GM12878 (cell line): ENCODE measurements at regions of chr7 and their contacts with region 1.

Region 1: GRCh38 chr7:106461993-106462859 is 177.4 kb upstream of the NAMPT start:
- DNase-seq: peak; percentile 39
- ATAC-seq: peak; percentile 83
- H3K4me3 ChIP-seq: no peak overlapping the region
- H3K27ac ChIP-seq: no peak overlapping the region
- H3K4me1 ChIP-seq: peaks cover 12% of the 10 kb centered on the region
- H3K27me3 ChIP-seq: no peaks in the 10 kb centered on the region
- CTCF ChIP-seq: peak; percentile 40 to 56 (median 47); a peak in 5 of 6 replicates
- EP300 ChIP-seq: no peak
- POLR2A ChIP-seq: no peak
- RAD21 ChIP-seq: peak; percentile 79

Region 2: GRCh38 chr7:106056513-106057203 is 405.6 kb before region 1 on chr7:
- CTCF ChIA-PET with region 1: interaction called, 4 read pairs
- POLR2A ChIA-PET with region 1: no interaction called
- RAD21 ChIA-PET with region 1: interaction called, 7 read pairs
- SMC1A ChIA-PET with region 1: interaction called, 4 read pairs
- in situ Hi-C with region 1: no loop called
- intact Hi-C with region 1: loop called (anchors 10 kb)
- DNase-seq: no peak
- ATAC-seq: peak; percentile 75
- H3K4me3 ChIP-seq: no peak overlapping the region
- H3K27ac ChIP-seq: peak overlapping the region; percentile 97
- H3K4me1 ChIP-seq: peaks cover 52% of the 10 kb centered on the region
- H3K27me3 ChIP-seq: no peaks in the 10 kb centered on the region
- CTCF ChIP-seq: peak; percentile 90 to 93 (median 92)
- EP300 ChIP-seq: no peak
- POLR2A ChIP-seq: no peak
- RAD21 ChIP-seq: peak; percentile 95

Region 3: DNA sequence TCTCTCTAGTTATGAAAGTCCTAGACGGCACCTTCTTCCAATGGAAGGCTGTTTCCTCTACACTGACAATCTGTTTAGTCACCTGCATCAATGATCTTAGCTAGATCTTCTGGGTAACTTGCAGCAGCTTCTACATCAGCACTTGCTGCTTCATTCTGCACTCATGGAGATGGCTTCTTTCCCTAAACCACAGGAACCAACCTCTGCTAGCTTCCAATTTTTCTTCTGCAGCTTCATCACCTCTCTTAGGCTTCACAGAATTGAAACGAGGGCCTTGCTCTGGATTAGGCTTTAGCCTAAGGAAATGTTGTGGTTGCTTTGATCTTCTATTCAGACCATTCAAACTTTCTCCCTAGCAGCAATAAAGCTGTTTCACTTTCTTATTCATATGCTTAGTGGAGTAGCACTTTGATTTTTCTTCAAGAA is 202.1 kb before region 1 on chr7:
- CTCF ChIA-PET with region 1: interaction called, 16 read pairs
- POLR2A ChIA-PET with region 1: no interaction called
- RAD21 ChIA-PET with region 1: interaction called, 5 read pairs
- SMC1A ChIA-PET with region 1: interaction called, 32 read pairs
- in situ Hi-C with region 1: no loop called
- intact Hi-C with region 1: no loop called
- DNase-seq: no peak
- ATAC-seq: peak; percentile 28
- H3K4me3 ChIP-seq: no peak overlapping the region
- H3K27ac ChIP-seq: no peak overlapping the region
- H3K4me1 ChIP-seq: peaks cover 18% of the 10 kb centered on the region
- H3K27me3 ChIP-seq: no peaks in the 10 kb centered on the region
- CTCF ChIP-seq: no peak
- EP300 ChIP-seq: no peak
- POLR2A ChIP-seq: no peak
- RAD21 ChIP-seq: no peak

Region 4: GRCh38 chr7:106285051-106285854 is 177.0 kb before region 1 on chr7:
- CTCF ChIA-PET with region 1: interaction called, 21 read pairs
- POLR2A ChIA-PET with region 1: interaction called, 3 read pairs
- RAD21 ChIA-PET with region 1: interaction called, 20 read pairs
- SMC1A ChIA-PET with region 1: interaction called, 8 read pairs
- in situ Hi-C with region 1: no loop called
- intact Hi-C with region 1: loop called (anchors 5 kb)
- DNase-seq: peak; percentile 97
- ATAC-seq: peak; percentile 77
- H3K4me3 ChIP-seq: peak overlapping the region; percentile 99
- H3K27ac ChIP-seq: peak overlapping the region; percentile 100
- H3K4me1 ChIP-seq: peaks cover 3% of the 10 kb centered on the region
- H3K27me3 ChIP-seq: no peaks in the 10 kb centered on the region
- CTCF ChIP-seq: no peak
- EP300 ChIP-seq: peak; percentile 42 to 52; a peak in 2 of 4 replicates
- POLR2A ChIP-seq: peak; percentile 78
- RAD21 ChIP-seq: no peak

Region 5: DNA sequence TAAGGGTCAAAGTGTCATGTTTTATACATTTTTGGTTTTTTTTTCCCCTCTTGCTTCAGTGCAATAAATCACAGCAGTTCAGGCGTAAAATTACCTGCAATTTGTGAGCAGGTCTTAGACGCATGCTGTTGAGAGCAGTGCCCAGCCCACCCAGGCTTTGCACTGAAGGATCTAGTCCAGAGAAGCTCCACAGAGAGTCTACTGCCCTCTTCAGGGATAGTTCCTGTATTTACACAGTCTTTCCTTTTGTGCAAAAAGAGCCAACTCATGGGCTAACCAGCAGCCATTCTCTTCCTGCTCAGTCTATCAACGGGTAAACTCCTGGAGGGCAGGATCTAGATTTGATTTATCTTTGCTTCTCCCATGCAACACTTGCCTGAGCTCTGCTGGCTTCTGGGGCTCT is 95.2 kb before region 1 on chr7:
- CTCF ChIA-PET with region 1: interaction called, 24 read pairs
- POLR2A ChIA-PET with region 1: no interaction called
- RAD21 ChIA-PET with region 1: interaction called, 18 read pairs
- SMC1A ChIA-PET with region 1: interaction called, 22 read pairs
- in situ Hi-C with region 1: no loop called
- intact Hi-C with region 1: loop called (anchors 5 kb)
- DNase-seq: no peak
- ATAC-seq: peak; percentile 80
- H3K4me3 ChIP-seq: no peak overlapping the region
- H3K27ac ChIP-seq: no peak overlapping the region
- H3K4me1 ChIP-seq: no peaks in the 10 kb centered on the region
- H3K27me3 ChIP-seq: no peaks in the 10 kb centered on the region
- CTCF ChIP-seq: peak; percentile 35 to 48 (median 41); a peak in 5 of 6 replicates
- EP300 ChIP-seq: no peak
- POLR2A ChIP-seq: no peak
- RAD21 ChIP-seq: peak; percentile 75

Region 6: GRCh38 chr7:106425017-106425719 is 37.1 kb before region 1 on chr7:
- CTCF ChIA-PET with region 1: interaction called, 15 read pairs
- POLR2A ChIA-PET with region 1: no interaction called
- RAD21 ChIA-PET with region 1: interaction called, 15 read pairs
- SMC1A ChIA-PET with region 1: interaction called, 20 read pairs
- in situ Hi-C with region 1: no loop called
- intact Hi-C with region 1: no loop called
- DNase-seq: peak; percentile 93
- ATAC-seq: peak; percentile 94
- H3K4me3 ChIP-seq: peak overlapping the region; percentile 37; the same call in 1 of the 2 replicates
- H3K27ac ChIP-seq: peak overlapping the region; percentile 81
- H3K4me1 ChIP-seq: peaks cover 23% of the 10 kb centered on the region
- H3K27me3 ChIP-seq: no peaks in the 10 kb centered on the region
- CTCF ChIP-seq: no peak
- EP300 ChIP-seq: peak; percentile 83 to 85
- POLR2A ChIP-seq: no peak
- RAD21 ChIP-seq: no peak

Region 7: GRCh38 chr7:106485031-106485551 is 22.9 kb after region 1 on chr7:
- CTCF ChIA-PET with region 1: interaction called, 11 read pairs
- POLR2A ChIA-PET with region 1: no interaction called
- RAD21 ChIA-PET with region 1: interaction called, 5 read pairs
- SMC1A ChIA-PET with region 1: interaction called, 12 read pairs
- in situ Hi-C with region 1: no loop called
- intact Hi-C with region 1: no loop called
- DNase-seq: no peak
- ATAC-seq: peak; percentile 65
- H3K4me3 ChIP-seq: no peak overlapping the region
- H3K27ac ChIP-seq: no peak overlapping the region
- H3K4me1 ChIP-seq: peaks cover 11% of the 10 kb centered on the region
- H3K27me3 ChIP-seq: no peaks in the 10 kb centered on the region
- CTCF ChIP-seq: no peak
- EP300 ChIP-seq: no peak
- POLR2A ChIP-seq: no peak
- RAD21 ChIP-seq: no peak

Region 8: DNA sequence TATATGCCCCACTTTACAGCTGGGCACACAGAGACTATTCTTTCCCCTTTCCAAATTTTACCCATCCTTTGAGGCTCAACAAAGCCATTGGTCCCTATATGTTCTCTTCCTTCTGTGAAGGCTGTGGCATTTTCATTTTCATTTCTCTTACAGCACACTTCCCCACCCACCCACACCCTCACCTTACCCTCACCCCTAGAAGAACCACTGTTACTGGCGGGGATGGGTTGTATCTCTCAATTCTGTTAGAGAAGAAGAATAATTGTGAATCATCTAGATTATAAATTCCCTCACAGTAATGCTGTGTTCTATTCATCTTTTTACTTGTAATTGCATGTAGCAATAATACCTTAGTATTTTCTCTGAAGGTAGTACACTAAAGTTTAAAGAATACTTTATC is 208.9 kb after region 1 on chr7:
- CTCF ChIA-PET with region 1: no interaction called
- POLR2A ChIA-PET with region 1: no interaction called
- RAD21 ChIA-PET with region 1: no interaction called
- SMC1A ChIA-PET with region 1: no interaction called
- in situ Hi-C with region 1: no loop called
- intact Hi-C with region 1: no loop called
- DNase-seq: no peak
- ATAC-seq: no peak
- H3K4me3 ChIP-seq: no peak overlapping the region
- H3K27ac ChIP-seq: no peak overlapping the region
- H3K4me1 ChIP-seq: no peaks in the 10 kb centered on the region
- H3K27me3 ChIP-seq: no peaks in the 10 kb centered on the region
- CTCF ChIP-seq: no peak
- EP300 ChIP-seq: no peak
- POLR2A ChIP-seq: no peak
- RAD21 ChIP-seq: no peak